Aorta (tissue), 5 donors: ENCODE measurements at regions of chr11 and their contacts with region 1.

Region 1: DNA sequence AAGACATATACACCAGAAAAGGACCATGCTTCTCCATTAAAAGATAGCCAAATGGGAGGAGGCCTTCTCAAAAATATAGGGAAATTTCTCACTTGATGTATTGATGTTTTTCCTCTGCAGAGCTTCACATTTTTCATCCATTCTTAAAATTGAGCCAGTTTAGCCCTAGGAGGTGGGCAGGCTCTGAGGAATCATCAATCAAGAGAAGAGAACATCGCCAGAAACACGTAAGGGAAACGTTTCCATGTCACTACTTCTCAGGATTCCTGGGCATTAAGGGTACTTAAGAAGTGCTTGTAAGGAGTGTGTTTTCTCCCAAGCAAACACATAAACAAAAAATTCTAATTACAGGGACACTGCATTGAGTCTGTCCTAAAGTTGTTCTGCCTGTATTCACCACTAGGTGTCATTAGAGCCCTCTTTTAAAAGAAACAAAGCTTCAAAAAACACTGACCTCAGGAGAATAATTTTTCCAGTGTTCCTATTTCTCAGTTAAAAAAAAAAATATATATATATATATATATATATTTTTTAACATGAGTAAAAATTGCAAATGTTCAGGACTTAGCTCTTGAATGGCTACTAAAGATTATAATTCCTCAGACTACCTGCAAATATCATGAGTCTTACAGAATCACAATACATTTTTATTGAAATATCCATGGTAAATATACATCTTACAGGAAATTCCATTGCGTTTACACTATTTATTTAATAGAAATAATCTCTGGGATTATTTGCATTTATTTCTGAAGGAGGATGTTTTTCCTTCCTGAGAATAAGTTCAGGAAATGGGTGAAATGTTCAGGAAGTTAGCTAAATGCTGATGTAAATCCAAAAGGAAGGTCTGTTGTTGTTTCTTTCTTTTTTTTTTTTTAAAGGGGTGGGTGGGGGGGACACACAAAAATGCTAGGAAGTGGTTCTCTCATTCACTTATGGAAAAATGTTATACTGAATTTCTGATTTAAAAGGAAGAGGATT is 16.0 kb downstream of the FZD4 start:
- DNase-seq: no peak
- ATAC-seq: peak; percentile 69
- H3K4me3 ChIP-seq: no peak overlapping the region
- H3K27ac ChIP-seq: peak overlapping the region in 1 of 2 donors; percentile 95
- H3K4me1 ChIP-seq: peaks cover 9 to 17% of the 10 kb centered on the region in 2 donors
- H3K27me3 ChIP-seq: no peaks in the 10 kb centered on the region

Region 2: GRCh38 chr11:87281496-87281895 is 342.3 kb after region 1 on chr11:
- intact Hi-C with region 1: loop called (anchors 1 to 5 kb)
- DNase-seq: no peak
- ATAC-seq: peak; percentile 88
- H3K4me3 ChIP-seq: peak overlapping the region in 1 of 2 donors; percentile 26
- H3K27ac ChIP-seq: no peak overlapping the region
- H3K4me1 ChIP-seq: no peaks in the 10 kb centered on the region
- H3K27me3 ChIP-seq: no peaks in the 10 kb centered on the region

Region 3: GRCh38 chr11:87290304-87290922 is 351.2 kb after region 1 on chr11:
- intact Hi-C with region 1: loop called in 1 of 2 experiments (anchors 5 kb)
- DNase-seq: no peak
- ATAC-seq: peak; percentile 59
- H3K4me3 ChIP-seq: no peak overlapping the region
- H3K27ac ChIP-seq: no peak overlapping the region
- H3K4me1 ChIP-seq: no peaks in the 10 kb centered on the region
- H3K27me3 ChIP-seq: no peaks in the 10 kb centered on the region

Region 4: GRCh38 chr11:87421422-87421821 is 482.2 kb after region 1 on chr11:
- intact Hi-C with region 1: loop called in 1 of 2 experiments (anchors 5 kb)
- DNase-seq: no peak
- ATAC-seq: peak; percentile 86
- H3K4me3 ChIP-seq: no peak overlapping the region
- H3K27ac ChIP-seq: no peak overlapping the region
- H3K4me1 ChIP-seq: peaks cover 4 to 6% of the 10 kb centered on the region in 2 donors
- H3K27me3 ChIP-seq: no peaks in the 10 kb centered on the region